Activated B cell treated with CpG ODN at 0.5 μM for 24 hours (primary cell): ENCODE measurements at regions of chr15 and their contacts with region 1.

Region 1: GRCh38 chr15:74906446-74907162 is at the start of gene FAM219B:
- DNase-seq: peak; percentile 77
- ATAC-seq: peak; percentile 92
- H3K4me3 Mint-ChIP-seq: peak within 1 kb of the TSS; percentile 98
- H3K27ac Mint-ChIP-seq: peak within 1 kb of the TSS; percentile 97
- H3K4me1 Mint-ChIP-seq: peaks cover 41% of the 10 kb centered on the region
- H3K27me3 Mint-ChIP-seq: no peaks in the 10 kb centered on the region
- CTCF ChIP-seq: no peak
- total RNA-seq, gene FAM219B: 76.0 and 90.4 TPM in 2 replicates

Region 2: DNA sequence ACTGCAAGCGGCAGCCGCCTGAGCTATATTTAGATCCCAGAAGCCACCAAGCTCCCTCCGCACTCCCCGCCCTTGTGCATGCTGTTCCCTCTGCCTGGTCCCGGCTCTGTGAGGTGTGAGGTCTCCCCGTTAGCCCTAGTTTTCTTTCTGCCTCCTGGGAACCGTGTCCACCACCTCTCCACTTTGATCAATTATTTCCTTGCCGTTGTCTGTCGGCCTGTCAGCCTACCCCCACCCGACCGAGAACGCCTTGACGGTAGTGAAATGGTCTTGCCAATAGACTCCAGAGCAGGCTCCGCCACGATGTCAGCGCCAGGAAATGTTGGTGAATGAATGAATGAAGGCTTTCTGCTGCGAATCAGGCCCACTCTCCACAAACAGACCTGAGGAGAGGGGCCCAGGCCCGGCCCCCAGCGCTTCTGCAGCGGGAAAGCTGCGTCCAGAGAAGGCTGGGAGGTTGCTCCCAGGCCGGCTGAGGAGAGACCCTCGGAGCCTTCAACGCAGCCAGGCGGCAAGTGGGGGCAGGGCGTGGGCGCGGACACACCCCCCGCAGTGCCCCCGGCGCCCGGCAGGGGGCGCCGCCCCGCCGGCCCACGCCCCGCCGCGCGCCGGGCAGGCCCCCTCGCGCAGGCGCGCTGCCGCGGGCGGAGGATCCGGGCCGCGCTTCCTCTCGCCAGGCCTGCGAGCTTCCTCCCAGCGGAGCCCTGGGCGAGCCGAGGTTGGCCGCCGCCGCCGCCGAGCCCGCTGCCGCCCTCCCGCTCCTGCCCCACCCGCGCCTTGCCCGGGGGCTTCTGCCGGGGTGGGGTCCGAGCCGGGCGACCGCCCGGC is 125.0 kb before region 1 on chr15 and contains the start of gene CSK:
- CTCF ChIA-PET with region 1: interaction called, 7 read pairs
- POLR2A ChIA-PET with region 1: interaction called, 11 read pairs
- intact Hi-C with region 1: no loop called
- DNase-seq: peak; percentile 90
- ATAC-seq: peak; percentile 42
- H3K4me3 Mint-ChIP-seq: peak within 1 kb of the TSS; percentile 94
- H3K27ac Mint-ChIP-seq: peak within 1 kb of the TSS; percentile 99
- H3K4me1 Mint-ChIP-seq: peaks cover 81% of the 10 kb centered on the region
- H3K27me3 Mint-ChIP-seq: no peaks in the 10 kb centered on the region
- CTCF ChIP-seq: no peak
- total RNA-seq, gene CSK: 540 and 557 TPM in 2 replicates

Region 3: DNA sequence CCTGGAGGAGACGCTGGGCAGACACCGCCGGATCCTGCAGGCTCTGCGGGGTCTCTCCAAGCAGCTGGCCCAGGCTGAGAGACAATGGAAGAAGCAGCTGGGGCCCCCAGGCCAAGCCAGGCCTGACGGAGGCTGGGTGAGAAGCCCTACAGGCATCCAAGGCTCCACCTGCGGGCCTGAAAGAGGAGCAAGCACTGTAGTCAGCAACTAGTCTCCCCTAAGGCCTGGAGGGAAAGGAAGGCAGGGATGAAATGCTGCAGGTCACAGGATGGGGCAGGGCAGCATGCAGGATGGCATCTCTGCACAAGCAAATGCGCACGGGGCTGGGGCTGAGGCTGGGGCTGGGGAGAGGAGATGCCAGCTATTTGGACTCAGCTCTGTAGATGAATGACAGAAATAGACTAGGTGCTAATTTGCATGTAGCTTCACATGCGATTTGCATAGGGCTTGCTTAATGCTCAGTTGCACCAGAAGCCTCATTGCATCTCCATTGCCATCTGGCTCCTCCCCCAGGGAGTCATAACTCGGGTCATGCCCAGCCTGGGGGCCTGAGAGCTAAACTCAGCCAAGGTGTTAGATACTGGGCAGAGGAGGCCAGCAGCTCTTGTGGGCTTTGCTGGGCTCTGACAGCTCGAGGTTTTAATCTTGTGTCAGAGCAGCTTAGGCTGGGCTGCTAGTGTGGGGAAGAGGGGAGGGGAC is 85.4 kb before region 1 on chr15:
- CTCF ChIA-PET with region 1: interaction called, 6 read pairs
- POLR2A ChIA-PET with region 1: no interaction called
- intact Hi-C with region 1: loop called (anchors 1 kb)
- DNase-seq: peak; percentile 47
- ATAC-seq: peak; percentile 92
- H3K4me3 Mint-ChIP-seq: peak overlapping the region; percentile 63
- H3K27ac Mint-ChIP-seq: peak overlapping the region; percentile 31
- H3K4me1 Mint-ChIP-seq: peaks cover 43% of the 10 kb centered on the region
- H3K27me3 Mint-ChIP-seq: no peaks in the 10 kb centered on the region
- CTCF ChIP-seq: no peak

Region 4: GRCh38 chr15:74857082-74857655 is 49.4 kb before region 1 on chr15:
- CTCF ChIA-PET with region 1: interaction called, 22 read pairs
- POLR2A ChIA-PET with region 1: interaction called, 4 read pairs
- intact Hi-C with region 1: no loop called
- DNase-seq: no peak
- ATAC-seq: peak; percentile 72
- H3K4me3 Mint-ChIP-seq: peak overlapping the region; percentile 44
- H3K27ac Mint-ChIP-seq: peak overlapping the region; percentile 83
- H3K4me1 Mint-ChIP-seq: peaks cover 52% of the 10 kb centered on the region
- H3K27me3 Mint-ChIP-seq: no peaks in the 10 kb centered on the region
- CTCF ChIP-seq: no peak

Region 5: GRCh38 chr15:74889883-74890664 is 16.5 kb before region 1 on chr15 and contains the start of gene MPI:
- CTCF ChIA-PET with region 1: interaction called, 18 read pairs
- POLR2A ChIA-PET with region 1: interaction called, 13 read pairs
- intact Hi-C with region 1: loop called (anchors 2 kb)
- DNase-seq: peak; percentile 79
- ATAC-seq: peak; percentile 99
- H3K4me3 Mint-ChIP-seq: peak within 1 kb of the TSS; percentile 96
- H3K27ac Mint-ChIP-seq: peak within 1 kb of the TSS; percentile 89
- H3K4me1 Mint-ChIP-seq: peaks cover 45% of the 10 kb centered on the region
- H3K27me3 Mint-ChIP-seq: no peaks in the 10 kb centered on the region
- CTCF ChIP-seq: no peak
- total RNA-seq, gene MPI: 33.1 and 40.2 TPM in 2 replicates

Region 6: GRCh38 chr15:74950078-74951000 is 43.7 kb after region 1 on chr15:
- CTCF ChIA-PET with region 1: interaction called, 14 read pairs
- POLR2A ChIA-PET with region 1: interaction called, 3 read pairs
- intact Hi-C with region 1: no loop called
- DNase-seq: peak; percentile 54
- ATAC-seq: peak; percentile 99
- H3K4me3 Mint-ChIP-seq: no peak overlapping the region
- H3K27ac Mint-ChIP-seq: no peak overlapping the region
- H3K4me1 Mint-ChIP-seq: peaks cover 4% of the 10 kb centered on the region
- H3K27me3 Mint-ChIP-seq: no peaks in the 10 kb centered on the region
- CTCF ChIP-seq: peak; percentile 24